Activated T-helper 1 cell treated with anti-CD3 and anti-CD28 coated beads, Interleukin-12 subunit alpha, Interleukin-12 subunit beta, Interleukin-2, Interleukin-4 antibody, amounts not matched to agents 30 ng/mL and 10 ng/mL and 1 ng/mL, durations not matched to agents 14 hours and 24 hours and 36 hours (primary cell): ENCODE measurements at regions of chr14 and their contacts with region 1.

Region 1: DNA sequence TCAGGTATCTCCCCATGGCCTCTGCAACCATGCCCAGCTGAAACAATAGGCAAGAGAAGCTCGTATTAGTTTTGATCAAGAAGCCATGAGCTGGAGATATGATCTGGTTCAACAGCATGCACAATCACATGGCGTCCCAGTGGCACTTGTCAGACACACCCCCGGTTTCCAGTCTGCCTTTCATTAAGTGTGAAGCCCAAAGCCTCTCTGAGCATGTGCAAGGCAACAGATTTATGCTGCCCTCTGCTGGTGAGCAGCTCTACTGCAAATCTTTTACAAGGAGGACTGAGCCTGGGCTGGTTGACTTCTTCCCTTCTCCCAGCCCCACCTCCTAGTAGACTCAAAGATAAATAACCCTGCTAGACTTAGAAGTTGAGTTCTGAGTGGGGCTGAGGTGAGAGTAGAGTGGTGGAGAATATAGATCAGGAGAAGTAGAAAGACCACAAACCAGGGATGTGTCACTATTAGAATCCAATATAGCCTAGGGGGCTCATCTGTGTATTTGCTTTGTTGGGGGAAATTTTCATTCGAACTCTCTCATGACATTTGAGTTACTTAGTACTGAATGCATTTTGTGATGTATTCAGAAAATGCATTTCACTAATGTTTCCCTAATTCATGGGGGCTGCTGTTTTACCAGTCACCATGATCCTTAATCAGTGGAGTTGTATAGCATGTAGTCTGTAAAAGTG is 53.7 kb upstream of the MBIP start:
- DNase-seq: peak; percentile 43
- H3K4me3 Mint-ChIP-seq: no peak overlapping the region
- H3K27ac Mint-ChIP-seq: no peak overlapping the region
- H3K4me1 Mint-ChIP-seq: no peaks in the 10 kb centered on the region
- H3K27me3 Mint-ChIP-seq: no peaks in the 10 kb centered on the region

Region 2: DNA sequence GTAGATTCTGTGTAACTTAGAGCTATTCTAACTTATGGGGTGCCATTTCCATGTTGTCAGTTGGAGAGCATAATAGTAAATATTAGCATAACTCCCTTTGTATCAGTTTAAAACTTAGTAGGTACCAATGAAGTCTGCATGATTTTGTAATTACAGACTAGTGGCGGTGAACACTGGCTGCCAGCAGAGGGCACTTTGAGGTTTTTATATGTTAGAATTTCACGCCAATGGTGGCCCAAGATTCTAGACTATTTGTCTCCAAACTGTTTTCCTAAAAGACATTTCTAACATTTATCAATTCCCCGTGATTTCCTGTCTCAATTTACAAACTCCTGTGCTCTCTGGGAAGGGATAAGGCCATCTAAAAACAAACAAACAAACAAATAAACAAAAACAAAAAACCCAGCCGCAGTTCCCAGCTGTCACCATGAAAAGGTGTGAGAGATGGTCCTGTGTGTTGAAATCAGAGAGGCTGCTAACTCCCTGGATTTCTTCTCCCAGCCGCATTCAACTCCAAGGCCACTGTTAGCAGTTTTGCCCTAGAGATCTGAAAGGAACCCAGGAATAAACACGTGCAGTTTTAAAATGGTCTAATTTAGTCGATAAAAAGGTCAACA is 490.3 kb before region 1 on chr14:
- intact Hi-C with region 1: loop called (anchors 1 kb)
- DNase-seq: no peak
- H3K4me3 Mint-ChIP-seq: no peak overlapping the region
- H3K27ac Mint-ChIP-seq: no peak overlapping the region
- H3K4me1 Mint-ChIP-seq: peaks cover 6% of the 10 kb centered on the region
- H3K27me3 Mint-ChIP-seq: no peaks in the 10 kb centered on the region

Region 3: GRCh38 chr14:36070031-36070719 is 304.0 kb before region 1 on chr14:
- intact Hi-C with region 1: loop called (anchors 1 kb)
- DNase-seq: no peak
- H3K4me3 Mint-ChIP-seq: no peak overlapping the region
- H3K27ac Mint-ChIP-seq: no peak overlapping the region
- H3K4me1 Mint-ChIP-seq: no peaks in the 10 kb centered on the region
- H3K27me3 Mint-ChIP-seq: peaks cover 22% of the 10 kb centered on the region

Region 4: GRCh38 chr14:36194663-36195062 is 179.5 kb before region 1 on chr14:
- intact Hi-C with region 1: no loop called
- DNase-seq: no peak
- H3K4me3 Mint-ChIP-seq: no peak overlapping the region
- H3K27ac Mint-ChIP-seq: no peak overlapping the region
- H3K4me1 Mint-ChIP-seq: no peaks in the 10 kb centered on the region
- H3K27me3 Mint-ChIP-seq: no peaks in the 10 kb centered on the region

Region 5: DNA sequence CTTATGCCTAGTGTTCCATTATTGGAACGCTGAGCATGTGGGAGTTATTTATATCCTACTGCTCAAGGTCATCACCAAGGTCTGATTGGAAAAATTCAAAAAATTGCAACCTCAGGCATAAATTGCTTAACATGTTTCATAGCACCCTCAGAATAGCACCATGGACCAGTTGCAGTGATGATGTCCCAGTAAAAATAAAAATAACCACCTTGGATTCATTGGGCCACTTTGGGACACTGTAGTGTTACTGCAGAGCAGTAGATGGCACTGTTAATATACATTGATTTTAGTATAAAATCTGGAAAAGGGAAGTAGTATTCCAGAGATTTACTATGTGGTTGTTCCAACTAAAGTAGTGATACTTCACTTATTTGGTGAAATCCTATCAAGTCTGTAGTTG is 166.6 kb before region 1 on chr14:
- intact Hi-C with region 1: loop called (anchors 5 kb)
- DNase-seq: no peak
- H3K4me3 Mint-ChIP-seq: no peak overlapping the region
- H3K27ac Mint-ChIP-seq: no peak overlapping the region
- H3K4me1 Mint-ChIP-seq: no peaks in the 10 kb centered on the region
- H3K27me3 Mint-ChIP-seq: no peaks in the 10 kb centered on the region

Region 6: GRCh38 chr14:36241183-36241582 is 132.9 kb before region 1 on chr14:
- intact Hi-C with region 1: loop called (anchors 1 kb)
- DNase-seq: no peak
- H3K4me3 Mint-ChIP-seq: no peak overlapping the region
- H3K27ac Mint-ChIP-seq: no peak overlapping the region
- H3K4me1 Mint-ChIP-seq: no peaks in the 10 kb centered on the region
- H3K27me3 Mint-ChIP-seq: peaks cover 4% of the 10 kb centered on the region

Region 7: DNA sequence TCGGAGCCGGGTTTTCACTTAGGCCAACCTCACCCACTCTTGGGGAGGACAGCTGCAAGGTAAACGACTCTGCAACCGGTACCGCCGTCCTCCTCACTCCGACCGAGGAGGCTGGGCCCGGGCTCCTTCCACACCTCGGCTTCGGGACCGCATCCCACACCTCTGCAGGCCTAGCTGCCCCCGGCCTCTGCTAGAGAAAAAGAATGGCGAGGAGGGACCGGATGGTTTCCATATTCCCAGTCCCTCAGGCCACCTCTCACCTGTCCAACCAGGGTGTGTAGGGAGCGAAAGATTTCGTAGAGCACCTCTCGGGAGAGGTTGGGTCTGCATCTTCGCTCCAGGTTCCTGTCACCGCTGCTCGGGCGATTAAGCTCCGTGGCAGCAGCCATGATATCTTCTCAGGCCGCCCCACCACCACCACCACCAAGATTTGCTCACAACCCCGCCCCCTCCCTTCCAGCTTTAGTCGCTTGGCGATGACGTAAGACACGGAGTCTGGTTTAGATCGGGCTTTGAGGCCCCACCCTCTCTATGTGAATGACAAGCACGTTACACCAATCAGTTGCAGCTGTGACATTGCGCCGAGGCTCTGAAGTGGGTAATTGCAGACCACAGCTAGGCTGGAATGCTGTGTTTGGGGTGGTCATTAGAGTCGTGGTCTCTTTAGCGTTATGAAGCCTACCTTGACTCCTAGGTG is 53.8 kb before region 1 on chr14 and contains the start of gene MBIP:
- intact Hi-C with region 1: loop called (anchors 2 kb)
- DNase-seq: peak; percentile 83
- H3K4me3 Mint-ChIP-seq: peak within 1 kb of the TSS; percentile 93
- H3K27ac Mint-ChIP-seq: peak within 1 kb of the TSS; percentile 92
- H3K4me1 Mint-ChIP-seq: peaks cover 41% of the 10 kb centered on the region
- H3K27me3 Mint-ChIP-seq: peaks cover 14% of the 10 kb centered on the region
- total RNA-seq, gene MBIP: 29.4 and 33.4 TPM in 2 replicates

Region 8: GRCh38 chr14:36604757-36605505 is 230.8 kb after region 1 on chr14:
- intact Hi-C with region 1: loop called (anchors 5 kb)
- DNase-seq: peak; percentile 12
- H3K4me3 Mint-ChIP-seq: no peak overlapping the region
- H3K27ac Mint-ChIP-seq: no peak overlapping the region
- H3K4me1 Mint-ChIP-seq: no peaks in the 10 kb centered on the region
- H3K27me3 Mint-ChIP-seq: peaks cover 2% of the 10 kb centered on the region